ENCODE measurements at regions of chr15 and their contacts with region 1.

Region 1: DNA sequence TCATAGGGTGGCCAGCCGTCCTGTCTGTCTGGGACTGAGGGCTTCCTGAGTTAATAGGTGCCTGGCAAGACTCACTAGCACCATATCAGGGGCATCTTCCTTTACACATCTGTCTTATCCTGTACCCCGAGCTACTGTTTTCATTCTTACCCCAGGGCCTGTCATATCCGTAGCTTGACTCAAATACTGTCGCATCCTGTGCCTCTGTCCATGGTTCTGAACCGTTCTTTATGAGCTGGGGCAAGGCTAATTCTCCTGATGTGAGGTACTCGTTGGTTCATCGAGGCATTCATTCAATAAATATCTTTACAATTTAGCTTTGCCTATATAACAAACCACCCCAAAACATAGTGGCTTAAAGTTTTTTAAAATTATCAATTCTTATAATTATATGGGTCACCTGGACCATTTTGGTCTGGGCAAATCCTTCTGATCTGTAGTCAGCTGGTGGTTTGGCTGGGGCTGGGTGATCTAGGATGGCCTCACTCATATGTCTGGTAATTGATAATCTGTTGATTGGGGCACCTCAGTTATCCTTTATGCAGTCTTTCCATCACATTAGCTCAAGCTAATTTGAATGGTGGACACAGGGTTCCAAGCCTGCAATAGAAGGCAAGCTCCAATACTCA is 121.2 kb downstream of the TLE3 start:
- DNase-seq: peak in 2 of 5 donors; percentile 26 to 31
- ATAC-seq: peak in 1 of 4 donors; percentile 59
- H3K4me3 ChIP-seq: no peak overlapping the region
- H3K27ac ChIP-seq: no peak overlapping the region
- H3K4me1 ChIP-seq: no peaks in the 10 kb centered on the region
- H3K27me3 ChIP-seq: peaks cover 0 to 35% (median 3%) of the 10 kb centered on the region in 9 donors
- CTCF ChIP-seq: no peak
- POLR2A ChIP-seq: no peak

Region 2: DNA sequence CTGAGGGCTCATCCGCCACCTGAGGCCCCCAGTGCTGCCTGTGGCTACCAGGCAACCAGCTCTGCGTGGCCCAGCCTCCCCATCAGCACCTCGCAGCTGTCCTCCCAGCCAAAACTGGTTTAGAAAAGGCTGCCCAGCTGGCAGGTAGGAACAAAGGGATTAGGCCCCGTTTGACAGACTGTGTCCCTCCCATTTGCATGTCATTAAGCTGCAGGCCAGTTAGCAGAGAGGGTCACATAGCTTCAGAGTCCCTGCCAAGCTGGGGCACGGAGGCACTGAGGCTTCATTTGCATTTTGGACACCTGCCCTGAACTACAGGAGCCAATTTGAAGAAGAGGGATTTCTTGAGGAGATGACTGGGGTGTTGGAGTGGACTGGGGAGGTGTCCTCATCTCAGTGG is 56.7 kb before region 1 on chr15:
- intact Hi-C with region 1: loop called in 1 of 10 experiments (anchors 10 kb)
- DNase-seq: no peak
- ATAC-seq: no peak
- H3K4me3 ChIP-seq: no peak overlapping the region
- H3K27ac ChIP-seq: no peak overlapping the region
- H3K4me1 ChIP-seq: no peaks in the 10 kb centered on the region
- H3K27me3 ChIP-seq: peaks cover 0 to 6% (median 0%) of the 10 kb centered on the region in 9 donors
- CTCF ChIP-seq: no peak
- POLR2A ChIP-seq: no peak

Region 3: DNA sequence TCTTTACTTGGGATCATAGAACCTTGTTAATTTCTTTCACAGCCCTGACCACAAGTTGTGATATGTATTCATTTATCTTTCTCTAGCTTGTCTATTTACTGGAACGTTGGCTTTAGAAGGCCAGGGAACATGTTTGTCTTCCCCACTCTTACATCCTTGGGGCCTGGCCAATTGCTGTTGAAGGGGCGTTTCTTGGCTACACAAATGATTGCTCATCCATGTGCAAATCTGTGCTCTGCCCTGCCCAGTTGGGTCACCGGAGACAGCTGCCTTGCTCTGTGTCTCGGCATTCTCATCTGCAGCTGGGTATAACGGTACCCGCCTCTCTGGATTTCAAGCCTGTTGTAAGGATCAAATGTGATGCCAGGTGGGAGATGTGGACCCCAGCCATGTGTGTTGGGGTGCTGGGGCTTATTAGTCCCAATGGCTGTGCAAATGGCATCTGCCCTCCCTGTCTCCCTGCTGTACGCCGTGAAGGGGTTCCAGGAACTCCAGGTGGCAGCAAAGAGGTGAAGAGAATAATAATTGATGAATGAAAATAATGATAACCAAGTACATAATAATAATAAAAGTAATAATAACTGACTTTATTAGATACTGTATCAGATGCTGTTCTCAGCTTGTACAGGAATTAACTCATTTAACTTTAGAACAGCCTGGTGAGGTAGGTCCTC is 145.3 kb after region 1 on chr15:
- intact Hi-C with region 1: no loop called
- DNase-seq: peak in 4 of 5 donors; percentile 36 to 64 (median 48)
- ATAC-seq: peak; percentile 45 to 84 (median 65)
- H3K4me3 ChIP-seq: no peak overlapping the region
- H3K27ac ChIP-seq: peak overlapping the region in 4 of 12 donors; percentile 10 to 43 (median 23)
- H3K4me1 ChIP-seq: peaks cover 0 to 23% (median 8%) of the 10 kb centered on the region in 12 donors
- H3K27me3 ChIP-seq: peaks cover 0 to 8% (median 0%) of the 10 kb centered on the region in 9 donors
- CTCF ChIP-seq: no peak
- POLR2A ChIP-seq: no peak